Activated naive CD4-positive, alpha-beta T cell treated with anti-CD3 and anti-CD28 coated beads, Interleukin-2, amount 10 ng/mL, durations not matched to agents 7 days and 5 days (primary cell): ENCODE measurements at regions of chr3 and their contacts with region 1.

Region 1: GRCh38 chr3:189961525-189962161 is 159.1 kb downstream of the P3H2 start:
- DNase-seq: peak; percentile 73
- H3K4me3 Mint-ChIP-seq: no peak overlapping the region
- H3K27ac Mint-ChIP-seq: no peak overlapping the region
- H3K4me1 Mint-ChIP-seq: peaks cover 3% of the 10 kb centered on the region
- H3K27me3 Mint-ChIP-seq: peaks cover 6% of the 10 kb centered on the region

Region 2: GRCh38 chr3:189270248-189270832 is 691.3 kb before region 1 on chr3:
- CTCF ChIA-PET with region 1: interaction called, 10 read pairs
- DNase-seq: peak; percentile 65
- H3K4me3 Mint-ChIP-seq: no peak overlapping the region
- H3K27ac Mint-ChIP-seq: no peak overlapping the region
- H3K4me1 Mint-ChIP-seq: peaks cover 13% of the 10 kb centered on the region
- H3K27me3 Mint-ChIP-seq: no peaks in the 10 kb centered on the region

Region 3: DNA sequence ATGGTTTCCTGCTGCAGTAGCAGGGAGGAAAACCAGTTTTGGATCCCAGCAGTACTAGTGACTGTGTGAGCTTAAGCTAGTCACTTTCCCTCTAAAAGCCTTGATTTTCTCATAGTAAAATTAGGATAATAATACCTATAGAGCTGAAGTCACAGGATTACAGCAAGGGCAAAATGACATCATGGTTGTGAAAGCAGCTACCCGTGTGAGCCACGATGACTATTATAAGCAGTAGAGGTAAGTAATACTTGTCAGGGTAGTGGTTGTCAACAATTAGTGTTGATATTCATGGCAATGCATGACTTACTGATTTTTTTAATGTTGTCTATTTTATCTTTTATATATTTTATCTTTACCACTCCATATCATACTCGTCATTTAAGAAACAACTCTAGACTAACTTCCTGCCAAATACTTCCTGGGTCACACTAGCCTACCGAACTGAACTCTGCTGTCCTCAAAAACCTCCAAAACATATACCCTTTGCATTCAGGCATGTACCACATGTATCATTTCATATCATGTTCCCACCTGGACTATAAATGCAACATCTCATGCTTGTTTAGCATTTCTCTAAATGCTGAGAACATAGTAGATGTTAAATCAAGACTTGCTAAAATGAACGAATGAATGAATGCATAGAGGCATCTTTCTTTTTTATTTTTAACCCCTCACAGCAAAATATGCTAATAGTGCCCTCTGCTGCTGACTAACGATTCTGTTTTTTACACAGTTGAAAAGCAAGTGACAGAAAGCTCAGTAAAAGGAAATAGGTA is 13.5 kb before region 1 on chr3:
- CTCF ChIA-PET with region 1: interaction called, 15 read pairs
- DNase-seq: no peak
- H3K4me3 Mint-ChIP-seq: no peak overlapping the region
- H3K27ac Mint-ChIP-seq: no peak overlapping the region
- H3K4me1 Mint-ChIP-seq: peaks cover 4% of the 10 kb centered on the region
- H3K27me3 Mint-ChIP-seq: peaks cover 6% of the 10 kb centered on the region

Region 4: DNA sequence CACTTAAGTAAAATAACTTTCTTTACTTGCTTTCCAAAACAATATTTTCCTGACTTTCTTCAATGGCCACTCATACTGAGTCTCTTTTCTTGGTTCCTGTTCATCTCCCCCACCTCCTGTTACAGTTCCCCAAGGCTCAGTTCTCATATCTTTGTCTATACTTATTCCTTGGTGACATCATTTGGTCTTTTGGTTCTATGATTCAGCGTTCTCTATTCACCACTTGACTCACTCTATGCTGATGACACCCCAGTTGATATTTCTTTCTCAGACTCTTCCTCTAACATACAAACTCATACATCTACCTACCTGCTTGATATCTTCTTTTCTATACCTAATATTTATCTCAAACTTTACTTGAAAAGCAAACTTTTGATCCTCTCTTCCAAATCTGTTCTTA is 244.1 kb after region 1 on chr3:
- CTCF ChIA-PET with region 1: interaction called, 29 read pairs
- DNase-seq: no peak
- H3K4me3 Mint-ChIP-seq: no peak overlapping the region
- H3K27ac Mint-ChIP-seq: no peak overlapping the region
- H3K4me1 Mint-ChIP-seq: no peaks in the 10 kb centered on the region
- H3K27me3 Mint-ChIP-seq: peaks cover 11% of the 10 kb centered on the region

Region 5: DNA sequence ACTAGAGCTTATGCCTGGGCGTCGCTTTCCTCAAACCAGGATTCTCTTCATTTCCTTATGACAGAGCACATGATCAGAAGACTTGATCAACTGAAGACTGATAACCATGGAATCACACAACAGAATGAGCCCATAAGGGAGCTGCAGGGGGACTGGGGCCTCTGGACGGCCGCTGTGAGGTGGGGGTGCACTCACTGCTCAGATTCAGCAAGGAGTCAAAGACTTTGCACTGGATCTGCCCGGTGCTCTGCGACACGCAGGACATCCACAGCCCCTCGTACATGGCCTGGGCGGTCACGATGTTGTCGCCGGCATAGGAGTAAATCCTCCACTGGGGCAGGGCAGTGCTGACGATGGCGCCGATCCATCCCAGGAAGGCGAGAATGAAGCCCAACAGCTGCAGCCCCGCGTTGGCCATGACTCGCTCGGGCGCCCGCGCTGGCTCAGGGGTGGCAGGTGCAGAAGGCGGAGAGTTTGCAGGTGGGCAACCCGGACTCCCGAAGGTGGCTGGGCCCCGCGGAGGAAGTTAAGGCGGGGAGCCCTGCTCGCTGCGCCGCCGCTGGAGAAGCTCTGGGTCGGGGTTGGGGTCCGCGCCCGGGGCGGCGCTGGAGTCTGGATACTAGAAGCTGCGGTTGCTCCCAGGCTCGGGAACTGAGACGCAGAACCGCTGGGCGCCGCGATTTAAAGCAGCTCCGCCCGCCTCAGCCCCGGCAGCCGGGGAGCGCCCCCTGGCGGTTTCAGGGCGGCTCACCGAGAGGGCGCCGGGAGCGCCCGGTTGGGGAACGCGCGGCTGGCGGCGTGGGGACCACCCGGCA is 360.4 kb after region 1 on chr3 and contains the start of gene CLDN1:
- CTCF ChIA-PET with region 1: interaction called, 21 read pairs
- DNase-seq: peak; percentile 74
- H3K4me3 Mint-ChIP-seq: peak within 1 kb of the TSS; percentile 57
- H3K27ac Mint-ChIP-seq: no peak within 1 kb of the TSS
- H3K4me1 Mint-ChIP-seq: peaks cover 11% of the 10 kb centered on the region
- H3K27me3 Mint-ChIP-seq: peaks cover 29% of the 10 kb centered on the region

Region 6: DNA sequence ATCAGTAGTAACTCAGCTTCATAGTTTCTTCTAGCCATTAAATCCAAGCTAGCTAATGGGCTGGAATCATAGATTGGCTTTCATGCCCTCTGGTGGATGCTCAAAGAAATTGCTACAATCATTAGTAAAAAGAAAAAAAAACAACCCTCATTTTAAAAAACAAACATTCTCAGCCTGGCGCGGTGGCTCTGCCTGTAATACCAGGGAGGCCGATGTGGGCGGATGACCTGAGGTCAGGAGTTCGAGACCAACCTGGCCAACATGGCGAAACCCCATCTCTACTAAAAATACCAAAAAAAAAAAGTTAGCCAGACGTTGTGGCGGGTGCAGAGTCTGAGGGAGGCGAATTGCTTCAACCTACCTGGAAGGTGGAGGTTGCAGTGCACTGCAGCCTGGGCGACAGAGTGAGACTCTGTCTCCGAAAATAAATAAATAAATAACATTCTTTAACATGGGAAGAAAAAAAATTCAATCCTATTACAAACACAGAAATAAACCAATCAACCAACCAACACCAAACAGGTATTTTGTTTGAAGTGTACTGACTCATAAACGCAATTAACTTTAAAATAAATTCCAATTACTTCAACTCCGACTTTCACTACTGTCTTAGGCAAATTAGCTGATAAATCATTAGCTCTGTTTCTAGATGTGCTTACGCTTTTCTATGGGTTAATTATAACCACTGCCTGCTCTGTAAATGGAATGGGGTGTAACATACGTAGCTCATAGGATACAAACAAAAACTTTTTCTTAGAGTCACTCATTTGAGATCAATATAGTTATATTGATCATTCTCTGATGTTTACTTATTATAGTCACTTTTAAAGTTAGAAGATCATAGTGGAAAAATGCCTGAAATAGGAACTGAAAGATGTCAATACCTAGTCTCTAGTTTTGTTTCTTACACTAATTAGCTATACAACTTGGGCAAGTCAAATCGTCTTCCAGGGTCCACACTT is 463.1 kb after region 1 on chr3:
- CTCF ChIA-PET with region 1: interaction called, 10 read pairs
- DNase-seq: peak; percentile 24
- H3K4me3 Mint-ChIP-seq: no peak overlapping the region
- H3K27ac Mint-ChIP-seq: no peak overlapping the region
- H3K4me1 Mint-ChIP-seq: no peaks in the 10 kb centered on the region
- H3K27me3 Mint-ChIP-seq: no peaks in the 10 kb centered on the region